BJ (cell line): ENCODE measurements at regions of chr15 and their contacts with region 1.

Region 1: GRCh38 chr15:83248151-83249029 is 36.1 kb downstream of the BNC1 start:
- DNase-seq: peak; percentile 8
- H3K4me3 ChIP-seq: no peak overlapping the region
- H3K27me3 ChIP-seq: peaks cover 4% of the 10 kb centered on the region; the same call in 1 of the 2 replicates
- CTCF ChIP-seq: peak; percentile 79

Region 2: DNA sequence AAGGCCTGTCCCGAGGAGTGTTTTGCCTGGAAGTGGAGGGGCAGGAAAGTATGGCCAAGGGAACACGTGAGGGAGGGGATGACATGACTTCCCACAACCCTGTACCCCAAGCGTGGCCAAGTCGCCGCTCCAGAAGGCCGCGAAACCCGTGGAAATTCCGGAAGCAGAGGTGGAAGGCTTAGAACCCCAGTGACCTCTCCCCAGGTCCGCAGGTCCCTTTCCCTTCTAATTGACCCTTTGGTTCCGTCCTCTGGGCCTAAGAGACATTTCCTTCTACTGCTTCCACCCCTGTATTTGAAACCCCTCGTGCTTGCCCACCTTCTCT is 180.8 kb before region 1 on chr15:
- CTCF ChIA-PET with region 1: no interaction called
- POLR2A ChIA-PET with region 1: no interaction called
- DNase-seq: no peak
- H3K4me3 ChIP-seq: peak overlapping the region; percentile 79
- H3K27me3 ChIP-seq: no peaks in the 10 kb centered on the region
- CTCF ChIP-seq: no peak

Region 3: GRCh38 chr15:83225449-83225848 is 22.9 kb before region 1 on chr15:
- CTCF ChIA-PET with region 1: no interaction called
- POLR2A ChIA-PET with region 1: no interaction called
- DNase-seq: no peak
- H3K4me3 ChIP-seq: no peak overlapping the region
- H3K27me3 ChIP-seq: no peaks in the 10 kb centered on the region
- CTCF ChIP-seq: no peak

Region 4: GRCh38 chr15:83372420-83372891 is 124.1 kb after region 1 on chr15:
- CTCF ChIA-PET with region 1: interaction called, 13 read pairs
- POLR2A ChIA-PET with region 1: no interaction called
- DNase-seq: no peak
- H3K4me3 ChIP-seq: no peak overlapping the region
- H3K27me3 ChIP-seq: peaks cover 11% of the 10 kb centered on the region
- CTCF ChIP-seq: no peak

Region 5: DNA sequence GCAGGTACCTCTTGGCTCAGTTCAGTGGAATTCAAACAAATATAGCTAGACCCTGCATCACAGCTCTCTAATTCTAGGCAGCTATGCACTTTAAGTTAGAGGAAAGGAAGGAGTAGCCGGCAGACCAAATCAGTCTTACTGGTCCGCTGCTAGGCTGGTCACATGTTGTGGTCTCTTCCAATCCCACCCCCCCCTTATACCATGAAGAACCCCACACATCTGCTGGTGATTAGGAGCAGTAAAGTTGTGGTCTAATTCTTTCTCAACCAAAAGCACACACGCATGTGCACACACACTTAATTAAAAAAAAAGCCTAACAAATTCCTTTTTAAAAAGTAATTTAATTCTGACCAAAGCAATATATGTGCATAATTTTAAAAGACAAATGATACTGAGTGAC is 182.1 kb after region 1 on chr15:
- CTCF ChIA-PET with region 1: interaction called, 145 read pairs
- POLR2A ChIA-PET with region 1: no interaction called
- DNase-seq: no peak
- H3K4me3 ChIP-seq: no peak overlapping the region
- H3K27me3 ChIP-seq: no peaks in the 10 kb centered on the region
- CTCF ChIP-seq: no peak

Region 6: DNA sequence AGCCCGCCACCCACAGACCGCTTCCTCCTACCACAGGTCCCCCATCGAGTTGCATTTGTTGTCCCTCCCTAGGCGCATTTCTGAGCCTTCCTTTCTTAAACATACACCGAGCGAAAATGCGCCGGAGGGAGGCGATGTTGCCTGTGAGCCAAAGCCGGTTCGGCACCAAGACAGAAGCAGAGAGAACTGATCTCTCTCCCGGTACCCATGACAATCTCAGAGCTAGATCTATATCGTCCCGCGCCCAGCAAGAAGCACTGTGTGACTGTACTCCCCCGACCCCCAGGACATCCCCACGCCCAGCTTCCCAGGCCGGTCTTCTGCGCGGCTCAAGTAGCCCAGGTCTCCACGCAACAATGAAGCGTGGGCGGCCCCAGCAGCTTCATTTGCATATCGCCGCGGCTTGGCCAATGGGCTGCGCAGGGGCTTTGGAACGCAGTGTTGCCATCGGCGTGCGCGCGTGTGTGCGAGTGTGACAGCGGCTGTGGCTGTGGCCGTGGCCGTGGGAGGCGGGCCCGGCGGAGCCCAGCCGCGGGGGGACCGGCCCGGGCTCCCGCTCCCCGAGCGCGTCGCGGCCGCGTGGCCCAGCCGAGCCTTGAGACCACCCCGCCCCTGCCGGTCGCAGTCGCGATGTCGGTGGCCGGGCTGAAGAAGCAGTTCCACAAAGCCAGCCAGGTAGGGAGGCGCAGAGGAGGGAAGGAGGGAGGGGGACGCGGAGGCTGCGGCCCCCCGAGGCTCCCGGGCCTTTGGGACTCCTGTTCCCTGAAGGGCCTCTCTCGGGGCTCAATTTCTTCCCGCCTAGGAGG is 198.7 kb after region 1 on chr15 and contains the start of gene SH3GL3:
- CTCF ChIA-PET with region 1: interaction called, 20 read pairs
- POLR2A ChIA-PET with region 1: no interaction called
- DNase-seq: no peak
- H3K4me3 ChIP-seq: peak within 1 kb of the TSS; percentile 44
- H3K27me3 ChIP-seq: peaks cover 10% of the 10 kb centered on the region
- CTCF ChIP-seq: peak; percentile 47
- polyA plus RNA-seq, gene SH3GL3: not detected in 2 replicates

Region 7: DNA sequence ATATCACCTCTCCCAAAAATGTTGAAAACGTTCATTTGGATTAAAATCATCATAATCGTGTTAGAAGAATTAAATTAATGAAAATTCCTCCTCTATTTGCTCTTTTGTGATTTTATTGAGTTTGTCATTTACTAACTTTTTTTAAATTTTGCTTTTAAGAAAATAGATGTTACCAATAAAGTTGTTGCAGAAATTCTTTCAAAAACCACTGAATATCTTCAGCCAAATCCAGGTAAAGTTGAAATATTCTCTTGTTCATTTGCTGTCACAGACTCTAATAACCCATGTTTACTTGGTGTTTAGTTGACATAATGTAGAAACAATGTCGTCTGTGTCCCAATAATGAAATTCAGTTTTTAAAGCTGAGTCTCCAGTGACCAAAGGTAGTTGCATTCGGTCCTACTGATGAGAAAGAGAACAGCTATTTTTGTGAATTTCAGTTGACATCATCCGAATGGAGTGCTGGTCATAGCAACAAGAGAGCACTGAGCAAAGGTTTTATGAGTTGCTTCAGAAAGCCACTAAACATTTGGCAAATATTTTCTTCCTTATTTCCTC is 316.7 kb after region 1 on chr15:
- CTCF ChIA-PET with region 1: interaction called, 88 read pairs
- POLR2A ChIA-PET with region 1: no interaction called
- DNase-seq: no peak
- H3K4me3 ChIP-seq: no peak overlapping the region
- H3K27me3 ChIP-seq: no peaks in the 10 kb centered on the region
- CTCF ChIP-seq: no peak

Region 8: DNA sequence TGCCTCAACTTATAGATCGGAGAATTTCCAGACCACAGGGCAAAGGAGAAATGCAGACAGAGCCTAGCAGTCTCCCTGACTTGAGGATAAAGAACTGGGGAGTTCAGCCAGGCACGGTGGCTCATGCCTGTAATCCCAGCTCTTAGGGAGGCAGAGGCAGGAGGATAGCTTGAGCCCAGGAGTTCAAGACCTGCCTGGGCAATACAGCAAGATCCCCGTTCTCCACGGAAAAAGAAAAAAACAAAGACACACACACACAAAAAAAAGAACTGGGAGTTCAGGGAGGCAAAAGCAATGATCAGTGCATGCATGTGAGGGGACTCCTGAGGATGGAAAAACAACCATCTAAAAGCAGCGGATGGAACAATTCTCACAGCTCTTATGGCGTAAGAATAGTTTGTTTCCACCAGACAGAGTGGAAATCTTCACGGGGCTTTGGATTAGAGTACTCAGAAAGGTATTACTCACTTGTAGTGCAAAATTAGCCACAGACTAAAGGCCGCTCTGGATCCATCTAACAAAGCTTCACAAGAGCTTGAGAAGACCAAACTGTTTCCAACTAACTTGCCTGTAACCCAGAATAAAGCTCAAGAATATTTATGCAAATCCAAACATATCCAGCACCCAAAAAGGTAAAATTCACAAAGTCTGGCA is 1451.3 kb after region 1 on chr15:
- CTCF ChIA-PET with region 1: no interaction called
- POLR2A ChIA-PET with region 1: no interaction called
- DNase-seq: no peak
- H3K4me3 ChIP-seq: no peak overlapping the region
- H3K27me3 ChIP-seq: no peaks in the 10 kb centered on the region
- CTCF ChIP-seq: no peak